Vagina (tissue), 2 donors: ENCODE measurements at regions of chr3 and their contacts with region 1.

Region 1: GRCh38 chr3:11651900-11652299 is 8.2 kb upstream of the VGLL4 start:
- DNase-seq: no peak
- H3K4me3 ChIP-seq: no peak overlapping the region
- H3K27ac ChIP-seq: no peak overlapping the region
- H3K4me1 ChIP-seq: peaks cover 6% of the 10 kb centered on the region
- H3K27me3 ChIP-seq: no peaks in the 10 kb centered on the region
- CTCF ChIP-seq: peak in 2 of 3 experiments; percentile 52
- POLR2A ChIP-seq: no peak

Region 2: DNA sequence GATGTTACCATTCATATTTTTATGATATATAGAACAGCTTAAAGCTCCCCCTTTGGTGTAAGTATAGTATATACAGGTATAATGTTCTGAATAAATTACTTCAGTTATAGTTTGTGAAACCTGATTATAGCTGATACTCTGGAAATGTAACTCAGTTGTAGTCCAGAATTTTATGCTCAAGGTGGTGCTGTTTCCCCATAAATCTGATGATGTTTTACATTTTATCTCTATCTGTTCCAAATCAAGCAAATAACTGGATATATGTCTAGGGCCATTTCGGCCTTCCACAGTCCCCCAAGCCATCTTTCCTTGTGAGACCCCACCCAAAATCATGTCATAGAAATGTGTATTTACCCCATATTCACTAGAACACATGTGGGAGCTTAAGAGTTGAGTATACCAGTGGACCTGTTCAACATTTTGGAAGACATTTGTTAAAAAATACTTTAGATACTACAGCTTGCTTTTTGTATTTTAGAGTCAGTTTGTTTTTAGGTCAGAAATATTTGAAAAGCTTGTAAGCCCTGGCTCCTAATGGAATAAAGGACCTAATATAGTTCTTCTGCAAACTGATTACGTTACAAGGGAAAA is 272.6 kb before region 1 on chr3:
- intact Hi-C with region 1: loop called (anchors 2 kb)
- DNase-seq: no peak
- H3K4me3 ChIP-seq: peak overlapping the region in 1 of 2 donors; percentile 4
- H3K27ac ChIP-seq: no peak overlapping the region
- H3K4me1 ChIP-seq: no peaks in the 10 kb centered on the region
- H3K27me3 ChIP-seq: no peaks in the 10 kb centered on the region
- CTCF ChIP-seq: peak; percentile 54 to 72 (median 65)
- POLR2A ChIP-seq: no peak

Region 3: GRCh38 chr3:11719406-11720230 is 67.7 kb after region 1 on chr3:
- intact Hi-C with region 1: loop called (anchors 10 kb)
- DNase-seq: no peak
- H3K4me3 ChIP-seq: peak overlapping the region; percentile 67 to 92
- H3K27ac ChIP-seq: peak overlapping the region; percentile 96
- H3K4me1 ChIP-seq: peaks cover 35% of the 10 kb centered on the region
- H3K27me3 ChIP-seq: no peaks in the 10 kb centered on the region
- CTCF ChIP-seq: no peak
- POLR2A ChIP-seq: no peak

Region 4: GRCh38 chr3:11791339-11792128 is 139.6 kb after region 1 on chr3:
- intact Hi-C with region 1: no loop called
- DNase-seq: no peak
- H3K4me3 ChIP-seq: no peak overlapping the region
- H3K27ac ChIP-seq: no peak overlapping the region
- H3K4me1 ChIP-seq: no peaks in the 10 kb centered on the region
- H3K27me3 ChIP-seq: no peaks in the 10 kb centered on the region
- CTCF ChIP-seq: no peak
- POLR2A ChIP-seq: no peak

Region 5: GRCh38 chr3:11803977-11804892 is 152.3 kb after region 1 on chr3:
- intact Hi-C with region 1: loop called (anchors 10 kb)
- DNase-seq: no peak
- H3K4me3 ChIP-seq: no peak overlapping the region
- H3K27ac ChIP-seq: no peak overlapping the region
- H3K4me1 ChIP-seq: peaks cover 21% of the 10 kb centered on the region
- H3K27me3 ChIP-seq: no peaks in the 10 kb centered on the region
- CTCF ChIP-seq: peak in 2 of 3 experiments; percentile 63 to 77
- POLR2A ChIP-seq: no peak